ENCODE measurements at regions of chr2 and their contacts with region 1.

Region 1: DNA sequence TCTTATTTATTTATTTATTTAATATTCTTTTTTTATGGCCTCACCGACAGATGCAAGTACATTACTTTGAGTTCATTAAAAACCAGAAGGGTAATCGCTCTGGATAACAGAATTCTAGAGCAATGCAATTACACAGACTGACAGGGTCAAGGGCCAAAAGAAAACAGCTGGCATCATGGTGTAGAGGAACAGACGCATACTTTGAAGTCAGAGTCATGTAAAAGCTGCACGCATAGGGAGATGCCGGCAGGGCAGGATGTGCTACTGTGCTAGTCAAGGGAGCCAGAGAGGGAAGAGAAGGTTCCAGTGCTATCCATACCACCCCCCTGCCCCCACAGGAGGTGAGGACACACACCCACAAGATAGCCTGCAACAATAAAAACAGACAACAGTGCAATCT is 115.2 kb upstream of the TFCP2L1 start:
- DNase-seq: no peak
- H3K4me3 ChIP-seq: no peak overlapping the region
- H3K4me3 Mint-ChIP-seq: no peak overlapping the region
- H3K27ac ChIP-seq: no peak overlapping the region
- H3K27ac Mint-ChIP-seq: peak overlapping the region in 1 of 7 donors; percentile 53
- H3K4me1 ChIP-seq: no peaks in the 10 kb centered on the region
- H3K4me1 Mint-ChIP-seq: peaks cover 7% of the 10 kb centered on the region
- H3K27me3 ChIP-seq: no peaks in the 10 kb centered on the region
- H3K27me3 Mint-ChIP-seq: no peaks in the 10 kb centered on the region
- CTCF ChIP-seq: no peak

Region 2: DNA sequence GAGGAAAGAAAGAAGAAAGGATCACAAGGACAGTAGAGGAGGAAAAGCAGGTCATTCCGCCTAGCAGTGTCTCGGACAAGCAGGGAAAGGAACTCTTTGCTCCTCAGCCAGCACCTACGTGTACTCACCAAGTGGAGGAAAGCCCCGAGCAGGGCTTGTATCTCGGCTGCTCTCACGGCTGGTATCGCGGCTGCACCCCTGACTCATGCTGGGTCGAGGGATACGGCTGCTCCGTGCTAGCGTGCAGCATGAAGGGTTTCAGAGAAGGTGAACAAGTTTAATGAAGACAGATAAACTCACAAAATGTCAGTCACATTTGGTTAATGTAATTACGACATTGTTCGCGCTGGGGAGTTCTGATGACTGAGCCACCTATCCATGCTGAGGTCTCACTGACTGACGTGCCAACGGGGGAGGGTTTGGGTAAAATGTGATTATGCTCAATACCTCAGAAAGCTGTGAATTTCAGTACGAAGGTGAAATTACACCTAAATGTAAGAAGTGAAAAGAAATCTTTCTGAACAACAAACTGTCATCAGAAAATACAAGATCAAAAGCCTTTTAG is 18.4 kb after region 1 on chr2:
- intact Hi-C with region 1: no loop called
- DNase-seq: no peak
- H3K4me3 ChIP-seq: no peak overlapping the region
- H3K4me3 Mint-ChIP-seq: no peak overlapping the region
- H3K27ac ChIP-seq: no peak overlapping the region
- H3K27ac Mint-ChIP-seq: no peak overlapping the region
- H3K4me1 ChIP-seq: no peaks in the 10 kb centered on the region
- H3K4me1 Mint-ChIP-seq: no peaks in the 10 kb centered on the region
- H3K27me3 ChIP-seq: no peaks in the 10 kb centered on the region
- H3K27me3 Mint-ChIP-seq: peaks cover 0 to 2% (median 0%) of the 10 kb centered on the region in 3 donors
- CTCF ChIP-seq: no peak

Region 3: DNA sequence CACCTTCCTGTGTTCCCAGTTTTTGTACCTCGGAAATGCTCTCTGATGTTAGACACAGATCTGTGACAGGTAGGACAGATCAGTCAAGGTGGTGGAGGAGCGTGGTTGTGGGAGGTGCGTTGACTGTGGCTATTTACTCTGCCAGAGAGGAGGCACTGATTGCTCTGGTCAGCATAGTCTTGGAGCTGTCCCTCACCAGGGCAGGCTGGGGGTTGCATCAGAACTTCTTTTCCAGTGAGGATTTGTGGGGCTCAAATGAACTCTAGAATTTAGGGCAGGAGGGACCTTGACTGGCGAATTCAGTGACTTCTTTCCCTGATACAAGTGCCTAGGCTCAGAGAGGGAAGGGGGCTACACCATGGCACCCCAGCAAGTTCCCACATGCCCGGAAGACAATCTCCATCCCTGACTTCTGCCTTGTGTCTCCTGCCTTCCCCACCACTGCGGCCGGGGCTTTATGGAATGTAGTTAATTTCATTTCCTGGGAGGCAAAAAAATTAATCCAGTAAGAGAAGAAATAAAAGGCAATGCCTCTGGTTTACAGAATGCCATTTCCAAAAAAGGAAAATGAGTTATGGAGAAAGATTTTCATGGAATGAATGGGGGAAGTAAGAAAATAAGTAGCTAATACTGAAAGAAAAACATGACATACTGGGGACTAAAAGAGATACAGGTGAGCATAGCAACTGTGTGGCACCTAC is 310.4 kb after region 1 on chr2:
- intact Hi-C with region 1: loop called (anchors 5 to 10 kb)
- DNase-seq: no peak
- H3K4me3 ChIP-seq: no peak overlapping the region
- H3K4me3 Mint-ChIP-seq: no peak overlapping the region
- H3K27ac ChIP-seq: no peak overlapping the region
- H3K27ac Mint-ChIP-seq: no peak overlapping the region
- H3K4me1 ChIP-seq: peaks cover 11 to 12% of the 10 kb centered on the region in 2 donors
- H3K4me1 Mint-ChIP-seq: peaks cover 19% of the 10 kb centered on the region
- H3K27me3 ChIP-seq: no peaks in the 10 kb centered on the region
- H3K27me3 Mint-ChIP-seq: peaks cover 0 to 3% (median 1%) of the 10 kb centered on the region in 3 donors
- CTCF ChIP-seq: no peak

Region 4: GRCh38 chr2:121717529-121717928 is 317.3 kb after region 1 on chr2:
- intact Hi-C with region 1: loop called (anchors 5 to 10 kb)
- DNase-seq: no peak
- H3K4me3 ChIP-seq: no peak overlapping the region
- H3K4me3 Mint-ChIP-seq: no peak overlapping the region
- H3K27ac ChIP-seq: no peak overlapping the region
- H3K27ac Mint-ChIP-seq: peak overlapping the region in 1 of 7 donors; percentile 66
- H3K4me1 ChIP-seq: peaks cover 6 to 9% of the 10 kb centered on the region in 2 donors
- H3K4me1 Mint-ChIP-seq: peaks cover 14% of the 10 kb centered on the region
- H3K27me3 ChIP-seq: no peaks in the 10 kb centered on the region
- H3K27me3 Mint-ChIP-seq: peaks cover 0 to 3% (median 0%) of the 10 kb centered on the region in 3 donors
- CTCF ChIP-seq: no peak

Measured in CD14-positive monocyte (primary cell).